Left ventricle myocardium superior (tissue), 1 donor: ENCODE measurements at regions of chr1 and their contacts with region 1.

Region 1: GRCh38 chr1:55284852-55285251 is 69.7 kb upstream of the USP24 start:
- DNase-seq: no peak
- ATAC-seq: peak; percentile 71

Region 2: DNA sequence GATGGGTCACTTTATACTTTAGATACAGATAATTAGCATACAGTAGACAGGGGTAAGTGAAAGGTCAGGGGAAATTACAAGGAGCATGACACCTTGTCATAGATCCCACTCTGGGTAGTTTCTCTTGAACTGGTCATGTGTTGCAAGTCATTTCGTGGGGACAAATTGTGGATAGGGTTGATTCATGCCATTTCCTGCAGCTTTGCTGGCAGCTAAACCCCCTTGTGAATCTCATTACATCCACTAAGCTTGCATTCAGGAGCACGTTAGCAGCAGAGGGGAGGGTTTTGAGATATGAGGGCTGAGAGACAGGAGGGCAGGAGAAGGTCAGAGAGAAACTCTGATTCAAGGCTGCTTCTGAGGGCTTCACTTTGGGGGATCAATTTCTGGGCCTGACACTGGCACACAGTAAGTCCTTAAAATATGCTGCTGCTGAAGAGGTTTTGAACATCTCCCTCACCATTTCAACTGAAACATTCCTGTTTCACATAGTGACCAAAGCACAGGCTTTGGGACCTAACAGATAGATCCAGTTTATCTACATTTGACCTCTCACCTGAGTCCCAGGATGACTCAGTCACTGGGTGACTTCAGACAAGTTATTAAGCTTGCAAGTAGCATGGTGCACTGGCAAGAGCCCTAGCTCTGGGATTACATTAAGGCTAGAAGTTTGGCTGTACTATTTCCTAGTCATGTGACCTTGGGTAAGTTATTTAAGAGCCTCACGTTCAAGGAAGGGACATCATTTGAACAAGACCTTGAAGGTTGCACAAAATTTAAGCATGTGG is 136.3 kb after region 1 on chr1:
- intact Hi-C with region 1: no loop called
- DNase-seq: no peak
- ATAC-seq: no peak

Region 3: DNA sequence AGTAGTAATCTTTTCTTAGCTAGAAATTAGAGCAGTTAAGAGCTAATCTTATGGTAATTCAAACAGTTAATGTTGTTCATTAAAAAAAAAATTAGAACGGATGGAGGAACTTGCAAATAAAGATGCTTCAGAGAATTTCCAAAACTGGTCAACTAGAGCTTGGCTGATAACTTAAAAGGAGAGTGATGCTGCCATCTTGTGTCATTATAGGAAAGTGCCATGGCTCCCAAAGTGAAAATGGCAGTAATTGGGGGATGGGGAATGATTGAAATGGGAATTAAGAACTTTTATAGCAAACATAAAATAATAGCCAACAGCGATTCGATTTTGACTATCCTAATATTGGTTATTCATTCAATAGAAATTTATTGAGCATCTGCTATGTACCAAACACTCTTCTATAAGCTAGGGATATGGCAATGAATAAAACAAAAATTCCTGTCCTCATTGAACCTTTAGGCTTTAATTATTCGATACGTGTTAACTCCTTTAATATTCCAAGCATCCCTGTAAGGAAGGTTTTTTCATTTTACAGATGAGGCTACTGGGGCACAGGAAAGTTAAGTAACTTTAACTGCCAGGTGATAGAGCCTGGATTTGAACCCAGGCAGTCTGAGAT is 1300.2 kb after region 1 on chr1:
- intact Hi-C with region 1: loop called (anchors 5 kb)
- DNase-seq: no peak
- ATAC-seq: peak; percentile 71

Region 4: GRCh38 chr1:56710646-56711045 is 1425.8 kb after region 1 on chr1:
- intact Hi-C with region 1: loop called (anchors 10 kb)
- DNase-seq: no peak
- ATAC-seq: no peak